ENCODE measurements at regions of chr1 and their contacts with region 1.

Region 1: GRCh38 chr1:172826096-172826743 is 167.3 kb downstream of the FASLG start:
- DNase-seq: peak; percentile 21
- ATAC-seq: peak; percentile 73
- H3K4me3 ChIP-seq: peak overlapping the region in 2 of 3 experiments; percentile 14 to 46; a peak in 2 of 6 replicates
- H3K27ac ChIP-seq: no peak overlapping the region
- H3K4me1 ChIP-seq: peaks cover 9% of the 10 kb centered on the region
- H3K27me3 ChIP-seq: no peaks in the 10 kb centered on the region
- CTCF ChIP-seq: peak; percentile 72
- EP300 ChIP-seq: no peak
- POLR2A ChIP-seq: no peak
- RAD21 ChIP-seq: peak; percentile 52; the same call in 1 of the 2 replicates

Region 2: GRCh38 chr1:172789866-172790644 is 36.2 kb before region 1 on chr1:
- CTCF ChIA-PET with region 1: no interaction called
- POLR2A ChIA-PET with region 1: no interaction called
- in situ Hi-C with region 1: no loop called
- intact Hi-C with region 1: no loop called
- DNase-seq: no peak
- ATAC-seq: no peak
- H3K4me3 ChIP-seq: no peak overlapping the region
- H3K27ac ChIP-seq: no peak overlapping the region
- H3K4me1 ChIP-seq: no peaks in the 10 kb centered on the region
- H3K27me3 ChIP-seq: no peaks in the 10 kb centered on the region
- CTCF ChIP-seq: no peak
- EP300 ChIP-seq: no peak
- POLR2A ChIP-seq: no peak
- RAD21 ChIP-seq: no peak

Region 3: GRCh38 chr1:173002891-173003838 is 176.9 kb after region 1 on chr1:
- CTCF ChIA-PET with region 1: no interaction called
- POLR2A ChIA-PET with region 1: no interaction called
- in situ Hi-C with region 1: no loop called
- intact Hi-C with region 1: loop called (anchors 10 kb)
- DNase-seq: no peak
- ATAC-seq: no peak
- H3K4me3 ChIP-seq: no peak overlapping the region
- H3K27ac ChIP-seq: no peak overlapping the region
- H3K4me1 ChIP-seq: 0 out of 2 replicates have a peak, but pooled peaks cover 9% of the 10 kb centered on the region
- H3K27me3 ChIP-seq: no peaks in the 10 kb centered on the region; a peak in 1 of 5 replicates
- CTCF ChIP-seq: no peak
- EP300 ChIP-seq: no peak
- POLR2A ChIP-seq: no peak
- RAD21 ChIP-seq: no peak